Activated CD4-positive, alpha-beta memory T cell treated with anti-CD3 and anti-CD28 coated beads, Interleukin-2, amount 10 ng/mL, durations not matched to agents 7 days and 5 days (primary cell): ENCODE measurements at regions of chr3 and their contacts with region 1.

Region 1: GRCh38 chr3:196073188-196073838 is 8.6 kb downstream of the TFRC start:
- DNase-seq: peak; percentile 77
- H3K4me3 Mint-ChIP-seq: no peak overlapping the region
- H3K27ac Mint-ChIP-seq: peak overlapping the region; percentile 76
- H3K4me1 Mint-ChIP-seq: peaks cover 51% of the 10 kb centered on the region
- H3K27me3 Mint-ChIP-seq: no peaks in the 10 kb centered on the region

Region 2: DNA sequence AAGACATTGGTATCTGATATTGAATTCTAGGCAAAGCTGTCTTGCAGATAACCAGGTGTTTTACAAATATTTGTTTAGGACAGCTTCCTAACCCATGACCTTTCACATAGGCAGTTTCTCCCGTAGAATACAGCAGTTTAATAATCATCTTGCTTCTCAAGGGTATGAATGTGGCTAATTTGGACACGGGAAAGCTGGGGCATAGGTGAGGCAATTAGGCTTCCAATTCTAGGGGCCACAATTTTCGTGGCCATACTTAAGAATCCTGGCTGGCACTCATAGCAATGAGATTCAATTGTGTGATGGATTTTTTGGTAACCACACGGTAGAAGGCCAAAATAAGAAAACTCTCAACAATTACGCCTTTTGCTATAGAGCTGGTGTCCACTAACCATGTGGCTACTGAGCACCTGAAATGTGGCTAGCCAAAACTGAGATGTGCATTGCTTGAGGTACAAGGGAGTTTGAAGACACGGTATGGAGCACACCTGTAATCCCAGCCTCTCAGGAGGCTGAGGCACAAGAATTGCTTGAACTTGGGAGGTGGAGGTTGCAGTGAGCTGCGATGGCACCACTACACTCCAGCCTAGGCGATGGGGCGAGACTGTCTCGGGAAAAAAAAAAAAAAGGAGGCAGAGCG is 25.8 kb before region 1 on chr3:
- CTCF ChIA-PET with region 1: interaction called, 30 read pairs
- POLR2A ChIA-PET with region 1: interaction called, 13 read pairs
- DNase-seq: no peak
- H3K4me3 Mint-ChIP-seq: no peak overlapping the region
- H3K27ac Mint-ChIP-seq: no peak overlapping the region
- H3K4me1 Mint-ChIP-seq: no peaks in the 10 kb centered on the region
- H3K27me3 Mint-ChIP-seq: no peaks in the 10 kb centered on the region

Region 3: DNA sequence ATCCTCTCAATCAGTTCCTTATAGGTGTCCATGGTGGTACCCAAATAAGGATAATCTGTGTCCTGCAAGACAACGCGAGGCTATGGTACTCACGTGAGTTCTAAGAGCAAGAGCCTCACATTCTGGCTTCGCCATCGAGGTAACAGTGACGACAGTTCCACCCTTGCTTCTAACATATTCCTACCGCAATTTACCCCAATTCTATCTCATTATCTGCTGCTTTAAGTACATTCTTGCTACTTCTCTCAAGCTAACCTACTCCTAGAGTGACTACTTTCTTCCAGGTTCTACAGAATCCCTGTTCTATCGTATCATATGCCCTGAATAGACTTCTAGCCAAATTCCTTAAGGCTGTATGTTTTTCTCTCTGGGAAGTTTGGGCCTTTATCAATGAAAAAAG is 18.1 kb before region 1 on chr3:
- CTCF ChIA-PET with region 1: interaction called, 30 read pairs
- POLR2A ChIA-PET with region 1: interaction called, 13 read pairs
- DNase-seq: no peak
- H3K4me3 Mint-ChIP-seq: no peak overlapping the region
- H3K27ac Mint-ChIP-seq: no peak overlapping the region
- H3K4me1 Mint-ChIP-seq: no peaks in the 10 kb centered on the region
- H3K27me3 Mint-ChIP-seq: no peaks in the 10 kb centered on the region

Region 4: DNA sequence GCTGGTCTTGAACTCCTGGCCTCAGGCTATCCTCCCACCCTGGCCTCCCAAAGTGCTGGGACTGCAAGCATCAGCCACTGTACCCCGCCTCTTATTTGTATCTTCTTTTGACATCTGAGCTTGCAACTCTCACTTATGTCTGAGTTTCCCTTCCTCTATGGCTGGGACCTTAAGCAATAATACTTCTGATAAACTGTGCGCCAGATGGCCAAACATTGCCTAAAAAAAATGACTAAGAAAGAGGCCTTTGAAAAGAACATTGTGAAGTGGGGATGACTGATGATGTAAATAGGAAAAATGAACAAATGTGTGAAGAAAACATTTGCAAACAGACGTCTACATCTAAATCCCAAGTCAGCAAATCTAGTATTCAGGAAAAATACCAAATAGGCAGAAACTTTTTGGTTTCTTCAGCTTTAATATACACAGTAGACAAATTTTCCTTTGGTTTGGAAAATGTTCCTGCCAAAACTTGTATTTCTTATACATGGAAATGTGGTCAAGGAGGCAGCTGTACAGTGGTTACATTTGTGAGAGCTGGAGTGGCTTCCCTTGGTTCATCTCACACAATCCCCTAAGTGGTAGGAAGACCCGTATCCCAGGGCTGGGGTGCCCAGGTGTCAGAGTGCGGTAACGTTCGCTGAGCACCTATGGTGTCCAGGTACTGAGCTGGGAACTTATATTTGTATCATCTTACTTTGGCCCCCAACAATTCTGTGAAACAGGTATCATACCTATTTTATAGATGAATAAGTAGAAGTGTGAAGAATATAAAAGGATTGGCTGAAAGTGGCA is 20.2 kb after region 1 on chr3:
- CTCF ChIA-PET with region 1: interaction called, 11 read pairs
- POLR2A ChIA-PET with region 1: interaction called, 5 read pairs
- DNase-seq: no peak
- H3K4me3 Mint-ChIP-seq: no peak overlapping the region
- H3K27ac Mint-ChIP-seq: no peak overlapping the region
- H3K4me1 Mint-ChIP-seq: peaks cover 8% of the 10 kb centered on the region
- H3K27me3 Mint-ChIP-seq: peaks cover 2% of the 10 kb centered on the region

Region 5: GRCh38 chr3:196179380-196180308 is 106.3 kb after region 1 on chr3:
- CTCF ChIA-PET with region 1: interaction called, 17 read pairs
- POLR2A ChIA-PET with region 1: interaction called, 237 read pairs
- DNase-seq: peak; percentile 91
- H3K4me3 Mint-ChIP-seq: peak overlapping the region; percentile 38
- H3K27ac Mint-ChIP-seq: peak overlapping the region; percentile 100
- H3K4me1 Mint-ChIP-seq: peaks cover 62% of the 10 kb centered on the region
- H3K27me3 Mint-ChIP-seq: no peaks in the 10 kb centered on the region

Region 6: DNA sequence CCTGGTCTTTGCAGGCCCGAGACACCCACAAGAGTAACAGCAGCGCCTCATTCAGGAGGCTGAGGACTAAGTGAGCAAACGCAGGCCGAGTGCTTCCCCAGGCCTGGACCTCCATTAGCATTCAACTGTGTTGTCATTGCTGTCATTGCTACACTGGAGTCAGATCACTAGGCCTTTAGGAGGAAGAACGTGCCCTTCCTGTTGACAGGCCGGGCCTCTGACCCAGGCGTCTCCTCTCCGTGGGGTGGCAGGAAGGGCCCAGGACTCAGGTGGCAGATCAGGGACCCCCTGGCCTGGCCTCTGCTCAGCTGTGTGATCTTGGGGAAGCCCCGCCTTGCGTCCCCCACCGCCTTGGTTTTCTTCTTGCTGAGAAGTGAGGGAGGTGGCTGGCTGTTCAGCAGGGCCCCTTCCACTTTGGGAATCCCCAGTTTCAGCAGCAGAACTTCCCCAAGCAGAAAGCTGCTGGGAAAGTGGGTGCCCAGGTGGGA is 118.8 kb after region 1 on chr3:
- CTCF ChIA-PET with region 1: interaction called, 167 read pairs
- POLR2A ChIA-PET with region 1: interaction called, 237 read pairs
- DNase-seq: peak; percentile 58
- H3K4me3 Mint-ChIP-seq: peak overlapping the region; percentile 34
- H3K27ac Mint-ChIP-seq: peak overlapping the region; percentile 95
- H3K4me1 Mint-ChIP-seq: peaks cover 58% of the 10 kb centered on the region
- H3K27me3 Mint-ChIP-seq: no peaks in the 10 kb centered on the region